ENCODE measurements at regions of chr2 and their contacts with region 1.

Region 1: DNA sequence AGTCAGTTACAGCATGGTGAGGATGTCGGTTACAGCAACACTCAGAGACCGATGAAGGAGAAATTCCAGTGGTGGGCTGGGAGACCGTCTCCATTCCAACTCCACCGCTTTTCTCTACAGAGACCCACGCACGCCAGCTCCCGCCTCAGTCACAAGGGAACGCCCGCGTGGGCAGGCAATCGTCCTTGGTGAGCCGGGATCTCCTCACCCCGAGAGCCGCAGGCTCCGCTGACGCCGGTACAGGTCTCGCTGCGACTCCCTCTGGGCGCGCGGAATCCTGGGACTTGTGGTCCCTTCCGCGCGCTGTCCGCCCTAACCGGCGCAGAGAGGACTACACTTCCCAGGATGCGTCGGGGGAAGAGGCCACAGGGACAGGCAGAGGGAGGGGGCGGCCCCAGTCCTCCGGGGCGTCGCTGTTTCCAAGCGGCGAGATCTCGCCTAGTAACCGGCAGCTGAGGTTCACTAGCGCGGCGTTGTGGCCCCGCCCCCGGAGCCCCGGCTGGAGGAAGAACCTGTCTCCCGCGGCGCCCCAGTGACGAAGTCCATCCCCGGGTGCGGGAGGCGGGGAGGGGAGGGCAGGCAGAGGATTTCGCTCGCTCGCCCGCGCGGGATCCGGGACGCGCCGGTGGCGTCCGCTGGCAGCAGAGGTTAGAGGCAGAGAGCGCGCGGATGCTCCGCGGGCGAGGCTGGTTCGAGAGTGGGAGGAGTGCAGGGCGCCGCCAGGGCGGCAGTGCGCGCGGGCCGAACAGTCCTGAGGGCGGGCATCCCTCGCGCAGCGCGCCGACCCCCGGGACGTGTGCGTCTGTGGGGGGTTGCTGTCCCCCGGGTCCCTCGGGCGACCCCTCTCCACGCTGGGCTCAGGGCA is at the start of gene EML6:
- DNase-seq: peak; percentile 99
- ATAC-seq: peak; percentile 100
- H3K4me3 ChIP-seq: peak within 1 kb of the TSS; percentile 70 to 72
- H3K27ac ChIP-seq: peak within 1 kb of the TSS in 1 of 2 donors; percentile 28
- H3K4me1 ChIP-seq: peaks cover 0 to 4% of the 10 kb centered on the region in 2 donors
- H3K27me3 ChIP-seq: no peaks in the 10 kb centered on the region
- total RNA-seq, gene EML6: 2.6 to 2.7 TPM

Region 2: DNA sequence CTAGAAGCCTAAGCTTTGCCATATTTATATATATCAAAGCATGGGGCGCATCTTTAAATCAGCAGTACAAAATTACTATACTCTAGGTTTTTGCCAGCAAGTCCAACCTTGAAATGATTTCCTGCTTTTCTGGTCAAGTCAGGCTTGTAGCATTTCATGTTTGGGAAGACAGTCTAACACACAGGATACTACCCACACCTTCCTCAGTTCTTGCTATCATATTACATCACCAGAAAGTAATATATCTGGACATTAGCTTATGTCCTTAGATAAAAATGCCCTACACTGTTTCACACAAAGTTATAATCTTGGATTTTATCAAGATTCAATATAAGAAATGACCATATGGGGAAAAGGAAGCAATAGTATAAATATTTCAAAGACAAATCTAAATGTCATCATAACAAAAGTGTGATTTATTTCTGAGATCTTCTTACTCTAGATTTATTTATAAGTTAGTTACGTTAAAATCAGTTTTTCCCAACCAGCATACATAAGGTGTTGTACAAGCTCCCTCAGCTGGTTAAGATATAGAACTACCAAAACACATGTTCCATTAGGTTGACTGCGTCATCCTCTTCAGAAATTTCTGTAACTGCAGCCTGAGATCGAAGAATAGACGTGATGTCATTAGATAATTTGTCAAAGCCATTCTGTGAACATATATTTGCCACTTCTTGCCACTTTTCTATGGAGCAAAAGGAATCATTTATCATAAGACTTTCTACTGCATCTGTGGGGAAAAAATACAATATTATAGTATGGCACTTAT is 452.1 kb after region 1 on chr2:
- intact Hi-C with region 1: loop called in 1 of 2 experiments (anchors 10 kb)
- DNase-seq: no peak
- ATAC-seq: peak; percentile 87
- H3K4me3 ChIP-seq: no peak overlapping the region
- H3K27ac ChIP-seq: no peak overlapping the region
- H3K4me1 ChIP-seq: no peaks in the 10 kb centered on the region
- H3K27me3 ChIP-seq: no peaks in the 10 kb centered on the region

Measured in aorta (tissue), 5 donors.